ENCODE measurements at regions of chr7 and their contacts with region 1.

Region 1: GRCh38 chr7:135274495-135275268 is 41.0 kb downstream of the STRA8 start:
- DNase-seq: peak; percentile 71 to 98
- H3K4me3 ChIP-seq: no peak overlapping the region
- H3K27ac ChIP-seq: no peak overlapping the region
- H3K4me1 ChIP-seq: no peaks in the 10 kb centered on the region; a peak in 1 of 7 replicates
- H3K27me3 ChIP-seq: no peaks in the 10 kb centered on the region
- CTCF ChIP-seq: peak; percentile 56 to 91 (median 74)
- EP300 ChIP-seq: no peak
- POLR2A ChIP-seq: no peak
- RAD21 ChIP-seq: peak; percentile 87 to 92

Region 2: GRCh38 chr7:135035252-135035651 is 239.4 kb before region 1 on chr7:
- CTCF ChIA-PET with region 1: no interaction called
- POLR2A ChIA-PET with region 1: no interaction called
- DNase-seq: no peak
- H3K4me3 ChIP-seq: no peak overlapping the region
- H3K27ac ChIP-seq: no peak overlapping the region
- H3K4me1 ChIP-seq: no peaks in the 10 kb centered on the region
- H3K27me3 ChIP-seq: no peaks in the 10 kb centered on the region
- CTCF ChIP-seq: no peak
- EP300 ChIP-seq: no peak
- POLR2A ChIP-seq: no peak
- RAD21 ChIP-seq: no peak

Region 3: DNA sequence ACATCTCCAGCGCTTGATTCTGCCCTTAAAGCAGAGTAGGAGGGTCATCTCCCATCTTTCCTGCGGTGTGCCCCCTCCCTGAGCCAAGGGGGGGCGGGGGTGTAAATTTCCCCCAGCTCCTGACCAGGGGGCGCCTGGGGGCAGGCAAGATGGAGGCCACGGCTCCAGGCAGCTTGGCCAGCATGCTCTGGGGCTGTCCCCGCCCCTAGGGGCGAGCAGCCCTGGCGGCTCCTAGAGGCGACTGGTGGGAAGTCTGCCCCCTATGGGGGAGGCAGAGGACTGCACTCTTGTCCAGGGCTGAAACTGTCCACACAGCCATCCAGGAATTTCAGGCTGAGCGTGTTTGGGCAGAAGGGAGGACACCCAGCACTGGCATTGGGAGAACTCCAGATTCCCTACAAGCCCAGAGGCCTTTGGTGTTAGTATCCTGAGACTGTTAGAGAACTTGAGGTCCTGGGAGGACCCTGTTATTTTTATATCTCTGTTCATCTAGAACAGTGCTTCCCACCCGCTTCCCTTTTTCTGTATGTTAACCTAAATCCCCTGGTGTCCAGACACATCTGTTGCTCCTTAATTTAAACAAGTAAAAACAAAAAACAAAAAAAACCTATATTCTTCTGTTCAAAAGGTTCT is 36.5 kb before region 1 on chr7:
- CTCF ChIA-PET with region 1: interaction called, 10 read pairs
- POLR2A ChIA-PET with region 1: no interaction called
- DNase-seq: peak in 1 of 2 experiments; percentile 84
- H3K4me3 ChIP-seq: no peak overlapping the region
- H3K27ac ChIP-seq: no peak overlapping the region
- H3K4me1 ChIP-seq: peaks cover 0 to 9% (median 1%) of the 10 kb centered on the region in 4 experiments; a peak in 5 of 7 replicates
- H3K27me3 ChIP-seq: no peaks in the 10 kb centered on the region
- CTCF ChIP-seq: peak; percentile 75 to 93 (median 83)
- EP300 ChIP-seq: no peak
- POLR2A ChIP-seq: no peak
- RAD21 ChIP-seq: peak; percentile 41 to 58

Region 4: GRCh38 chr7:135260930-135261721 is 13.6 kb before region 1 on chr7:
- CTCF ChIA-PET with region 1: interaction called, 53 read pairs
- POLR2A ChIA-PET with region 1: interaction called, 3 read pairs
- DNase-seq: no peak
- H3K4me3 ChIP-seq: no peak overlapping the region
- H3K27ac ChIP-seq: no peak overlapping the region
- H3K4me1 ChIP-seq: peaks cover 0 to 5% (median 4%) of the 10 kb centered on the region in 4 experiments; a peak in 4 of 7 replicates
- H3K27me3 ChIP-seq: no peaks in the 10 kb centered on the region
- CTCF ChIP-seq: no peak
- EP300 ChIP-seq: no peak
- POLR2A ChIP-seq: no peak
- RAD21 ChIP-seq: no peak

Region 5: DNA sequence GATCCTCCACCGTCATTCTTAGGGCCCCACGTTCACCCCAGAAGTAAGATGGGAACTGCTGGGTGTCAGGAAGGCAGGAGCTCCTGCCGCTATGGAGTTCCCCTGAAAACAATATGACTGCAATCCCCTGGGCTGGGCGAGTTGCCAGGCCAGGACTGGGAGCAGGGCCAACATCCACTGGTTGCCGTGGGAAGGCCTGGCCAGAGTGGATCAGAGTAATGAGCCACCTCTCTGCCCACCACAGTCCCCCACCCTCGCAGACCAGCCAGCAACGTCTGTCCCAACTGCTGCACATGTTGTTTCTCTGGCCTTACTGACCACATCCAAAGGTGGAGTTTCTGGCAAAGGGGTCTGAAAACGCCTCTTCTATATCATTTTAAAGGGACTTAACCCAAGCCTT is 45.6 kb after region 1 on chr7:
- CTCF ChIA-PET with region 1: interaction called, 49 read pairs
- POLR2A ChIA-PET with region 1: no interaction called
- DNase-seq: no peak
- H3K4me3 ChIP-seq: no peak overlapping the region
- H3K27ac ChIP-seq: no peak overlapping the region
- H3K4me1 ChIP-seq: no peaks in the 10 kb centered on the region
- H3K27me3 ChIP-seq: no peaks in the 10 kb centered on the region
- CTCF ChIP-seq: no peak
- EP300 ChIP-seq: no peak
- POLR2A ChIP-seq: no peak
- RAD21 ChIP-seq: no peak

Region 6: GRCh38 chr7:135335628-135336139 is 61.0 kb after region 1 on chr7:
- CTCF ChIA-PET with region 1: interaction called, 171 read pairs
- POLR2A ChIA-PET with region 1: interaction called, 4 read pairs
- DNase-seq: peak; percentile 93 to 95
- H3K4me3 ChIP-seq: no peak overlapping the region
- H3K27ac ChIP-seq: no peak overlapping the region
- H3K4me1 ChIP-seq: peaks cover 0 to 4% (median 2%) of the 10 kb centered on the region in 4 experiments; a peak in 5 of 7 replicates
- H3K27me3 ChIP-seq: no peaks in the 10 kb centered on the region
- CTCF ChIP-seq: peak; percentile 90 to 98 (median 95)
- EP300 ChIP-seq: peak in 1 of 2 experiments; percentile 32; a peak in 1 of 3 replicates
- POLR2A ChIP-seq: no peak
- RAD21 ChIP-seq: peak; percentile 99 to 100

Region 7: DNA sequence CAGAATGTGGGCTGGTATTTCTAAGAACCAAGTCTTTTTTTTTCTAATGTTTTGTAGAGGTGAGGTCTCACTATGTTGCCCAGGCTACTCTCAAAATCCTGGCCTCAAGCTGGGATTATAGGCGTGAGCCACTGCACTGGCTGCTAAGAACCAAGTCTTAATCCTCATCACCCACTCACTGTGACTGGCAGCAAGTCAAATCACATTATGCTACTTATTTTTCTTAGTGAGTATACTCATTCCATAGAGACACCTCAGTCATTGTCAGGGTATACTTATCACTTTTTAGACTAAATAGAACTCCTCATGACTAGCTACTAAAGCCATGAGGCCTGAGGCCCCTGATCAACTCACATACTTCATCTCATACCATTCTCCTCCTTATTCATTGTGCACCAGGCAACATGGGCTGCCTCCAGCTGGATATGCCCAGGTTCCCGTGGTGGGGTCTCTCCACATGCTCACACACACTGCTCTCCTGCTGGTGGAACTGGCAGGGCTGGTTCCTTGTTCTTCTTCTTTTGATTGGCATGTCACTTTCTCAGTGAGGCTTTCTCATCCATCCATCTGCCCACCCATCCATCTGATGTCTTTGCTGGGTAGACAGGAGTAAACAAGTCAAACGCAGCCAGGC is 75.2 kb after region 1 on chr7:
- CTCF ChIA-PET with region 1: interaction called, 40 read pairs
- POLR2A ChIA-PET with region 1: no interaction called
- DNase-seq: no peak
- H3K4me3 ChIP-seq: no peak overlapping the region
- H3K27ac ChIP-seq: no peak overlapping the region
- H3K4me1 ChIP-seq: no peaks in the 10 kb centered on the region
- H3K27me3 ChIP-seq: no peaks in the 10 kb centered on the region
- CTCF ChIP-seq: no peak
- EP300 ChIP-seq: no peak
- POLR2A ChIP-seq: no peak
- RAD21 ChIP-seq: no peak

Region 8: GRCh38 chr7:135362871-135363270 is 88.2 kb after region 1 on chr7:
- CTCF ChIA-PET with region 1: interaction called, 61 read pairs
- POLR2A ChIA-PET with region 1: no interaction called
- DNase-seq: peak in 1 of 2 experiments; percentile 72
- H3K4me3 ChIP-seq: no peak overlapping the region
- H3K27ac ChIP-seq: no peak overlapping the region
- H3K4me1 ChIP-seq: no peaks in the 10 kb centered on the region
- H3K27me3 ChIP-seq: no peaks in the 10 kb centered on the region
- CTCF ChIP-seq: peak; percentile 60 to 78 (median 75)
- EP300 ChIP-seq: no peak
- POLR2A ChIP-seq: no peak
- RAD21 ChIP-seq: peak; percentile 26 to 44; a peak in 3 of 4 replicates

Region 9: GRCh38 chr7:135690566-135690965 is 415.9 kb after region 1 on chr7:
- CTCF ChIA-PET with region 1: no interaction called
- POLR2A ChIA-PET with region 1: no interaction called
- DNase-seq: no peak
- H3K4me3 ChIP-seq: no peak overlapping the region
- H3K27ac ChIP-seq: no peak overlapping the region
- H3K4me1 ChIP-seq: no peaks in the 10 kb centered on the region
- H3K27me3 ChIP-seq: no peaks in the 10 kb centered on the region
- CTCF ChIP-seq: no peak
- EP300 ChIP-seq: no peak
- POLR2A ChIP-seq: no peak
- RAD21 ChIP-seq: no peak

Measured in H1 (cell line).